ENCODE measurements at regions of chr12 and their contacts with region 1.

Region 1: DNA sequence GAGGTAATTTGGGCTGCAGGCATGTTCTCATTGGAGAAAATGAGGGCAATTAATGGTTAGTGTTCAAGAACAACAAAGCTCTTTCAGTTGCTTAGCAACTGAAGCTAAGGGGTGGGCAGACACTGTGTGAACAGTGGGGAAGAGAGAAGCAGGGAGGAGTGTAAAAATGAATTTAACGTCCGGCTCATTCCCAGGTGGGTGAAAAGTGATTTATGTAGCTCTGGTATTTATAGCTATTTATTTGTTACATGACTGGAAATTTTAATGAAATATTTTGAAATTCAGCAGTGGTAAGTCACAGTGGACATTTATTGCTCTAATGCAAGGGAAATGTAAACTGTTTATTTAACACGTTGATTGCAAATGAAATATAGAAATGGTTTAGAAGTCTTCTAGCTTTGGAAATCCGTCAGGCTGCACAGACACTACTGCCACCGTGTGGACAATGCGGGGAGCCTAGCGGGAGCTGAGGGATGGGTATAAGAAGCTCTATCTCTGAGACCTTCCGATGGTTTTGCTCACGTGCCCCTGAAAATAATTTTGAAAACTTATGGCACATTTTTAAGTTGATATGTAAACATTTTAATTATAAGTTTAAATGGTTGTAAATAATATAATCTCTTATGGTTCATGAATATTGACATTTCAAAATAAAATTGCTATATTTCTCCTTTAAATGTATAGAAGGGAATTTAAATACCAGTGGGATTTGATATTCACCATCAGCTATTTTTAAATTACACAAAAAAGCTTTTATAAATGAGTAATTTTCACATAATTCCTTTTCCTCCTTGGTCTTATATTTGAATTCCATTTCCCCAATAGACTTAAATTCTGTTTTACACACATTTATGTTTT is 54.4 kb downstream of the E2F7 start:
- DNase-seq: peak; percentile 77
- H3K4me3 ChIP-seq: no peak overlapping the region; a peak in 1 of 4 replicates
- H3K27ac ChIP-seq: no peak overlapping the region
- H3K4me1 ChIP-seq: peaks cover 0 to 3% of the 10 kb centered on the region in 2 experiments; a peak in 2 of 4 replicates
- H3K27me3 ChIP-seq: no peaks in the 10 kb centered on the region
- CTCF ChIP-seq: peak; percentile 99
- EP300 ChIP-seq: no peak
- RAD21 ChIP-seq: peak; percentile 93

Region 2: GRCh38 chr12:76621582-76622024 is 389.3 kb before region 1 on chr12:
- CTCF ChIA-PET with region 1: interaction called, 32 read pairs
- POLR2A ChIA-PET with region 1: no interaction called
- DNase-seq: peak; percentile 63
- H3K4me3 ChIP-seq: no peak overlapping the region; a peak in 1 of 4 replicates
- H3K27ac ChIP-seq: no peak overlapping the region
- H3K4me1 ChIP-seq: peaks cover 0 to 3% of the 10 kb centered on the region in 2 experiments; a peak in 2 of 4 replicates
- H3K27me3 ChIP-seq: no peaks in the 10 kb centered on the region
- CTCF ChIP-seq: peak; percentile 96
- EP300 ChIP-seq: no peak
- RAD21 ChIP-seq: peak; percentile 98

Region 3: DNA sequence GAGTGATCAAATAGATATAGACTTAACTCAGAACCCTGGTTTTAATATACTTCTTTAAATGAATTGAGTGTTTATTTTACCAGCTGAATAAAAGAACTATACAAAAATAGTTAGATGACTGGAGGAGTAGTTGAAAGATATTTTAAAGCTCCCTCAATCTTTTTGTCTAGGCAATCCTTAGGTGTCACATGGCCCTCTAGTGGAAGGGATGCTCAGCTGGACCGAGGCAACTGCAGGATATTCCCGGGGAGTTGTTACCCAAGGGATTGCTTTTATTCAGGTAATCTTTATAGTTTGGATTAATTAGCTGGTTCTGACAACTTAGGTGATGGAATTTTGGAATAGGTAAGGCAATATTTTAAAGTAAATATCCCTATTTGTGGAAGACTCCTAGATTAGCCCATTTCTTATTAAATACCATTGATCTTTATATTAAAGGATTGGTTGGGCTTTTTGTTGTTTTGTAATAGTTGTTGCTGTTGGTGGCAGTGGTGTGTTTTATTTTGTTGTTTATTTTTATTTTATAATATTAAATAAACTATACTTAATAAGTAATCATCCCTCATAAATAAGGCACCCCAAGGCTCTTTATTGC is 189.9 kb before region 1 on chr12:
- CTCF ChIA-PET with region 1: interaction called, 20 read pairs
- POLR2A ChIA-PET with region 1: no interaction called
- DNase-seq: peak; percentile 34
- H3K4me3 ChIP-seq: peak overlapping the region in 1 of 2 experiments; percentile 43; a peak in 1 of 4 replicates
- H3K27ac ChIP-seq: no peak overlapping the region
- H3K4me1 ChIP-seq: no peaks in the 10 kb centered on the region; a peak in 2 of 4 replicates
- H3K27me3 ChIP-seq: no peaks in the 10 kb centered on the region
- CTCF ChIP-seq: peak; percentile 75
- EP300 ChIP-seq: no peak
- RAD21 ChIP-seq: peak; percentile 53

Region 4: GRCh38 chr12:76878899-76879709 is 131.8 kb before region 1 on chr12 and contains the start of gene CSRP2:
- CTCF ChIA-PET with region 1: interaction called, 20 read pairs
- POLR2A ChIA-PET with region 1: interaction called, 3 read pairs
- DNase-seq: peak; percentile 97
- H3K4me3 ChIP-seq: peak within 1 kb of the TSS; percentile 89 to 94
- H3K27ac ChIP-seq: peak within 1 kb of the TSS; percentile 81 to 92
- H3K4me1 ChIP-seq: peaks cover 3 to 22% of the 10 kb centered on the region in 2 experiments; a peak in 2 of 4 replicates
- H3K27me3 ChIP-seq: no peaks in the 10 kb centered on the region
- CTCF ChIP-seq: peak; percentile 53
- EP300 ChIP-seq: peak in 1 of 2 experiments; percentile 34; a peak in 1 of 4 replicates
- RAD21 ChIP-seq: 0 out of 2 replicates have a peak, but pooled peaks have one; percentile 7
- polyA plus RNA-seq, gene CSRP2: 87.6 and 98.2 TPM in 2 replicates

Region 5: DNA sequence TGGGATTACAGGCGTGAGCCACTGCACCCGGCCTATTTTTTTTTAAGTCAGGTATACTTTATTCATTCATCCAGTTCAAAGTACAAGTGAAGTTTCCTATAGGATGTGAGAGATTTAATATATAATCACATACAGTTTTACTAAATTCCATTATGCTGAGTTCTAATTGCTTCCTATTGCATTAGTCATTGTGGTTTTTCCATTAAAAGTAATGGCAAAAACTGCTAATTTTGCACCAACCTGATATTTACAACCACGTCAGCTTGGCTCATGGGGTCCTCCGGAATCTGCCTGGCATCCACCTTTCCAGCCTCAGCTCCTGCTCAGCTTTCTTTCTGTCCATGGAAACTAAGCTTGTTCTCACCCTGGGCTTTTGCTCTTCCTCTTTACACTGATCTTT is 65.1 kb before region 1 on chr12:
- CTCF ChIA-PET with region 1: interaction called, 11 read pairs
- POLR2A ChIA-PET with region 1: no interaction called
- DNase-seq: no peak
- H3K4me3 ChIP-seq: no peak overlapping the region
- H3K27ac ChIP-seq: peak overlapping the region in 1 of 2 experiments; percentile 21; a peak in 1 of 4 replicates
- H3K4me1 ChIP-seq: peaks cover 16 to 25% of the 10 kb centered on the region in 2 experiments; a peak in 3 of 4 replicates
- H3K27me3 ChIP-seq: no peaks in the 10 kb centered on the region
- CTCF ChIP-seq: no peak
- EP300 ChIP-seq: peak in 1 of 2 experiments; percentile 50; a peak in 1 of 4 replicates
- RAD21 ChIP-seq: no peak

Region 6: DNA sequence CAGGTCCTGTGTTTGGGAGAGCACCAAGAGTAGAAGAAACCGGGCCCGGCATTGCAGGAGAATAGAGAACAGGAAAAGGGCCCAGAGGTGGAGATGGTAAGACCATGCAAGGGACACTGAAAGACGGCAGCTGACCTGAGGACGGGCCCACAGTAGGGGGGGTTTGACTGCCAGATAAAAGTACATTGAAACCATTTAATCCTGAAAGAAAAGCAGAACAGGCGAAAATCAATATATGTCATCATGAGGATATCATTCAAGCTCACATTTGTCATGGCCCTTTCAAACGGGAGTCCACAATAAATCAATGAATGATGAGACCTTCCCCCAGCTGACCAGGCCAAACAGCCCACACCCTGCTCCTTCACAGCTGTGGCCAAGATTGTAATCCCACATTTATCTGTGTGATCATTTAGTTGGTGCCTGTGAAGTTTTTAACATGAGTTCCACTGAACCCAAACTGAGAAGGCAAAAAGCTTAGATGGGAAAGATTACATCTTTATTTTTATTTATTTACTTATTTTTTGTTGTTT is 14.9 kb after region 1 on chr12:
- CTCF ChIA-PET with region 1: interaction called, 45 read pairs
- POLR2A ChIA-PET with region 1: no interaction called
- DNase-seq: no peak
- H3K4me3 ChIP-seq: no peak overlapping the region
- H3K27ac ChIP-seq: no peak overlapping the region
- H3K4me1 ChIP-seq: peaks cover 0 to 9% of the 10 kb centered on the region in 2 experiments; a peak in 1 of 4 replicates
- H3K27me3 ChIP-seq: no peaks in the 10 kb centered on the region
- CTCF ChIP-seq: no peak
- EP300 ChIP-seq: no peak
- RAD21 ChIP-seq: no peak

Region 7: DNA sequence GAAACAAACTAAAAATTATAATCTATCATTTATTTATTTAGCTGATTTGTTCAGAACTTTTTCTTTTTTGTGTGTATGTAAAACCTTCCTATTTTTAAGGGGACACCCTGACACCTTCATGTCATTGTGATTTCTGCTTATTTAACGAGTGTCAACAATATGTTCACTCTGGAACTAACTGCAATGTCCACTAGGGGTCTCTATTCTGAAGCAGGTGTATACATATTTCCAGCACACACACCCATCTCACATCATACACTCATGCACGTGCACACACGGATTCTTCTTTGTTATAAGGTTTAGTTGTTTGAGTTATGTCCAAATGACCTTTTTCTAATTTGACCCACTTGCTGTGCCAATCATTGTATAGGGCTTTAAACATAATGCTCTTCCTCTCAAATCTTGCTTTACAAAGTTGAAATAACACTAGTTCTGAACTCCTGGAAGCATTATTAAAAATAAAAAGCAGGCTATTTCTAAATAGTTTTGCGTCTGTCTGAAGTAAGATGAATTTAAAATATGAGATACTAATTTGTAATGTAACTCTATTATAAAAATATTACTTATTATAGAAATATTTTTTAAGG is 38.9 kb after region 1 on chr12:
- CTCF ChIA-PET with region 1: interaction called, 11 read pairs
- POLR2A ChIA-PET with region 1: no interaction called
- DNase-seq: peak; percentile 49
- H3K4me3 ChIP-seq: no peak overlapping the region
- H3K27ac ChIP-seq: no peak overlapping the region
- H3K4me1 ChIP-seq: peaks cover 0 to 18% of the 10 kb centered on the region in 2 experiments; a peak in 3 of 4 replicates
- H3K27me3 ChIP-seq: no peaks in the 10 kb centered on the region
- CTCF ChIP-seq: peak; percentile 89
- EP300 ChIP-seq: no peak
- RAD21 ChIP-seq: peak; percentile 76

Region 8: DNA sequence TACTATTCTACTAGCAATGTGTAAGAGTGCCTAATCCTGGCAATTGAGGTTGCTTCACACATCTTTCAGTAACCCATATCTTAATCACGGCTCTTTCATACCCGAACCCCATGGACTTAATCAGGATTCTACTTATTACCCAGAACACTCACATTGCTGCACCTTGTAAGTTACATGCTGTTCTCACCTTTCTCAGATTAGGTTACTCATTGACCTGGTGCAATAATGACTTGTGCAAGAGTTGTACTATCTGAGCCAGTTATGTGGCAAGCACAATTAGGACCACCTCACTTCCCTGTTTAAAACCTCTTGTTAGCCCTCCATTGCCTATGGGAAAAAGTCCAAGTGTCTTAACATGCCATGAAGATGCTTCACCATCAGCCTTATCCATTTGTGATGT is 361.1 kb after region 1 on chr12:
- CTCF ChIA-PET with region 1: no interaction called
- POLR2A ChIA-PET with region 1: no interaction called
- DNase-seq: no peak
- H3K4me3 ChIP-seq: no peak overlapping the region
- H3K27ac ChIP-seq: no peak overlapping the region
- H3K4me1 ChIP-seq: no peaks in the 10 kb centered on the region
- H3K27me3 ChIP-seq: no peaks in the 10 kb centered on the region
- CTCF ChIP-seq: no peak
- EP300 ChIP-seq: no peak
- RAD21 ChIP-seq: no peak